ENCODE measurements at regions of chr10 and their contacts with region 1.

Region 1: GRCh38 chr10:17228091-17228940 is at the start of gene VIM:
- DNase-seq: peak; percentile 95 to 99 (median 98)
- H3K4me3 ChIP-seq: peak within 1 kb of the TSS; percentile 91 to 98 (median 93)
- H3K27ac ChIP-seq: peak within 1 kb of the TSS; percentile 93 to 94
- H3K4me1 ChIP-seq: peaks cover 15 to 41% (median 30%) of the 10 kb centered on the region in 4 experiments
- H3K27me3 ChIP-seq: no peaks in the 10 kb centered on the region

Region 2: GRCh38 chr10:17200912-17201793 is 27.2 kb before region 1 on chr10 and contains the start of gene TRDMT1:
- CTCF ChIA-PET with region 1: interaction called, 36 read pairs
- POLR2A ChIA-PET with region 1: interaction called, 72 read pairs
- DNase-seq: peak; percentile 78 to 90 (median 83)
- H3K4me3 ChIP-seq: peak within 1 kb of the TSS; percentile 59 to 94 (median 84)
- H3K27ac ChIP-seq: peak within 1 kb of the TSS; percentile 94 to 98
- H3K4me1 ChIP-seq: peaks cover 10 to 43% (median 25%) of the 10 kb centered on the region in 4 experiments
- H3K27me3 ChIP-seq: no peaks in the 10 kb centered on the region

Region 3: DNA sequence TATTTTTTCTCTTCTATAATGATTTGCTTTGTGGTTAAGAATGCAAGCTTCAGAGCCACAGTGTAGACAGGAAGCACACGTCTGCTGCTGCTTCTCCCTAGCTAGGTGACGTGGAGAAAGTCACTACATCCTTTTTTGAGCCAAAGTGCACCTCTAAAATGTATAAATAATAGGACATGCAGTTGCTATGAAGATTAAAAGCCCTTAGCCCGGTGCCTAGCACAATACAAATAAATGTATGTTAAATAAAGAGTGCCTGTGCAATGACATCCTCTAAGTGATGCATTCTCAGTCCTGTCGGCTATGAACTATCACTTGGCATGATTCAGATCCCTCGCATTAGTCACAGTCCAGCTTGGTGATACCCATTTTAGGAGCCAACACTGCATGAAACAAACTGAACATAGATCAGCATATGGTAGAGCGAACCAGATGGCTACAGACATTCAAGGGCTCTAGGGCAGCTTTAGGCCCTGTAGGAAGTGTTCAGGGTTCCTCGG is 22.1 kb before region 1 on chr10:
- CTCF ChIA-PET with region 1: interaction called, 36 read pairs
- POLR2A ChIA-PET with region 1: interaction called, 72 read pairs
- DNase-seq: peak; percentile 75 to 98 (median 96)
- H3K4me3 ChIP-seq: no peak overlapping the region
- H3K27ac ChIP-seq: peak overlapping the region; percentile 81 to 93
- H3K4me1 ChIP-seq: peaks cover 7 to 44% (median 30%) of the 10 kb centered on the region in 4 experiments
- H3K27me3 ChIP-seq: no peaks in the 10 kb centered on the region

Measured in common myeloid progenitor, CD34-positive (primary cell).